ENCODE measurements at regions of chr10 and their contacts with region 1.

Region 1: DNA sequence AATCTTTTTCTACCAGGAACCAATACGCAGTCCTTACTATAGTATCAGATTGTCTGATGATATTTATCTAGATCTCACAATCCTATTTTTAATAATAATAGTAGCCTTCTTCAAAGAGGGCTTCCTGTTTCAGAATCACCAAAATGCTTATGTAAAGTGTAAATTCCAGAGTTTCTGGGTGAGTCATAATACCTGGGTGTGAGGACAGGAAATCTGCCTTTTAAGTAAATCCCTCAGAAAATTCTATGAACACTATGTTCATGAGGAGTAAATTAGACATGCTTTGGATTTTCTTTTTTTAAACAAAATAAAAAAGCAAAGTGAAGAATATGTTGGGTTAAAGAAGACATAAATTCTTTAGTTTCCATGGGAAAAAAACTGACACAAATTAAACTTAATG is 20.5 kb downstream of the DKK1 start:
- DNase-seq: no peak
- H3K4me3 ChIP-seq: no peak overlapping the region
- H3K27ac ChIP-seq: no peak overlapping the region
- H3K4me1 ChIP-seq: no peaks in the 10 kb centered on the region
- H3K27me3 ChIP-seq: no peaks in the 10 kb centered on the region
- CTCF ChIP-seq: no peak
- POLR2A ChIP-seq: no peak

Region 2: GRCh38 chr10:52313933-52314816 is 20.4 kb before region 1 on chr10 and contains the start of gene DKK1:
- intact Hi-C with region 1: no loop called
- DNase-seq: peak in 1 of 2 donors; percentile 21
- H3K4me3 ChIP-seq: peak within 1 kb of the TSS; percentile 54 to 73 (median 55)
- H3K27ac ChIP-seq: no peak within 1 kb of the TSS
- H3K4me1 ChIP-seq: no peaks in the 10 kb centered on the region
- H3K27me3 ChIP-seq: peaks cover 0 to 41% of the 10 kb centered on the region in 2 donors
- CTCF ChIP-seq: peak; percentile 42 to 53 (median 45)
- POLR2A ChIP-seq: no peak
- total RNA-seq, gene DKK1: 2.0 to 142 (median 3.3) TPM

Region 3: GRCh38 chr10:52368741-52369140 is 34.1 kb after region 1 on chr10:
- intact Hi-C with region 1: loop called (anchors 2 kb)
- DNase-seq: no peak
- H3K4me3 ChIP-seq: no peak overlapping the region
- H3K27ac ChIP-seq: no peak overlapping the region
- H3K4me1 ChIP-seq: no peaks in the 10 kb centered on the region
- H3K27me3 ChIP-seq: no peaks in the 10 kb centered on the region
- CTCF ChIP-seq: no peak
- POLR2A ChIP-seq: no peak

Measured in breast epithelium (tissue), 4 donors.